Dorsolateral prefrontal cortex (tissue), 120 donors: ENCODE measurements at regions of chr7 and their contacts with region 1.

Region 1: DNA sequence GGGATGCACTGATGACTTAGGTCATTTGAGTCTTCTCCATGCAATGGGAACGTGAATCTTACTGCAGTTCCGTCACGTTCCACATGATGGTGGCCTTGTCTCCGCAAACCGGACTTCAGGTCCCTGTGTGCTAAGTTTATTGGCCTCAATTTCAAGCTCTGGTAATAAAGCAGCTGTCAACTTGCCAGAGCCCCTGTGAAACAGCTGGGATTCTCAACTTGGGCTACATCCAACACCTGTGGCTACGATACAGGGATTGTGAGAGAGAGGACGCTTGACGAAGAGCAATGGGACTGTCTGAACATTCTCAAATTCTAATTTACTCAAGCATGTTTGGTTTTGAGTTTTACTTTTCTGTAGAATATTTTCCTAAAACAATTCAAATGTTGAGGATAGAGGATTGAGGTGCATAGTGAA is 174.2 kb downstream of the PTN start:
- DNase-seq: peak; percentile 19 to 80 (median 54)
- H3K4me3 ChIP-seq: peak overlapping the region in 13 of 59 donors; percentile 2 to 37 (median 30)
- H3K27ac ChIP-seq: no peak overlapping the region
- H3K27me3 ChIP-seq: no peaks in the 10 kb centered on the region
- CTCF ChIP-seq: peak in 55 of 56 donors; percentile 47 to 92 (median 77)

Region 2: GRCh38 chr7:137328373-137329120 is 159.3 kb after region 1 on chr7:
- intact Hi-C with region 1: loop called in 1 of 2 experiments (anchors 5 kb)
- DNase-seq: peak in 6 of 10 donors; percentile 15 to 70 (median 52)
- H3K4me3 ChIP-seq: peak overlapping the region in 2 of 59 donors; percentile 5 to 10
- H3K27ac ChIP-seq: peak overlapping the region in 57 of 59 donors; percentile 29 to 88 (median 73)
- H3K27me3 ChIP-seq: no peaks in the 10 kb centered on the region
- CTCF ChIP-seq: peak in 2 of 56 donors; percentile 18 to 20

Region 3: DNA sequence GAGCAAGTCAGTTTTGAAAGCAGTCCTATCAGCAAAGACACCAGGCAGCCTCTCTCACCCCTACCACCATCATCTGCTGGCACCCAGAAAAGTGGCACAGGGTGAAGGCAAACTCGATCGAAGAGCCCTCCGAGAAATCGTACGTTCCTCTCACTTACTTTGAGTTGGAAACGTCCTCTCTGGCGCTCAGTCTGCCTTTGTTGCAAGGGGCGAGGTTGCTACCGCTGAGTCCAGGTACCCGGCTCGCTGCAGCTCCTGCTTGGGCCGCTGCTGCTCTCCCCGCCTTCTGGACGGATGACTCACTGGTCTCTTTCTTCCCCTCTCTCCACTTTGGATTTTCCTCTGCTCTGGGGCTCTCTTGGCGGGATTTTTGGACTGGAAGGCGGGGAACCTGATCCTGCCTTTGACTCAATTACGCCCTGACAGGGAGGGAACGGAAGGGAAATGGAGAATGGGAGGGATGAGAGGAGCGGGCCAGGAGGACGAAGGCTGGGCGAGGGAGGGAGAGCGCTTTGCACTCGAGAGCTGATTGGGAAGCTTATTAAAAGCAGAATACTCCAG is 174.1 kb after region 1 on chr7 and contains the start of gene PTN:
- intact Hi-C with region 1: loop called in 1 of 2 experiments (anchors 5 kb)
- DNase-seq: peak; percentile 9 to 63 (median 51)
- H3K4me3 ChIP-seq: peak within 1 kb of the TSS; percentile 41 to 85 (median 69)
- H3K27ac ChIP-seq: peak within 1 kb of the TSS; percentile 26 to 91 (median 80)
- H3K27me3 ChIP-seq: no peaks in the 10 kb centered on the region
- CTCF ChIP-seq: peak in 10 of 56 donors; percentile 11 to 32 (median 20)
- total RNA-seq, gene PTN: 48.1 to 232 (median 85.8) TPM